T-cell (primary cell): ENCODE measurements at regions of chr3 and their contacts with region 1.

Region 1: DNA sequence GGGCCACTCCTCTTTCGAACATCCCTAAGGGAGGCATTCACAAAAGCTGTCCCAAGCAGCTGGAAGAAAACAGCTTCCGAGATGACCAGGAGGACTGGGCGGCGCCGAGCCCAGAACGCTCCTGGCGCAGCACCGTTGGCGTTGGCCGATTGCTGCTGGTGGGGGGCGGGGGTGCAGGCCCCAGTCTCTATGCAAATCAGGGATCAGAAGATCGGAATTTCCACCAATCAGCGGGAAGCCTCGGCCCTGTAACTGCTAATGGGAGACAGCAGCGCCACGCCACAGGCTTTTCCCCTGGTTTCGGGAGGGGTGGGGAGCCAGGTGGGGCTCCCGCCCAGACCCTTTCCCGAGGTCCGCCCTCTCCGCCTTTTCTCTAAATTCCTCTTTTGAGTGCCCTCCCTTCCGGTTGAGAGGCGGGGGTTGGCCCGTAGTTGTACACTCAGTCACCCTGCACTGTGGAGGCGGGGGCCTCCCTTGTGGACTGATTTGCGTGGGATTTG is 27.0 kb downstream of the HMCES start:
- DNase-seq: peak in 6 of 35 experiments; percentile 7 to 49 (median 24)
- ATAC-seq: peak in 3 of 4 experiments; percentile 22 to 45 (median 44)
- H3K4me3 ChIP-seq: no peak overlapping the region
- H3K4me3 Mint-ChIP-seq: peak overlapping the region in 1 of 3 donors; percentile 28
- H3K27ac ChIP-seq: no peak overlapping the region
- H3K27ac Mint-ChIP-seq: peak overlapping the region; percentile 55 to 87
- H3K4me1 ChIP-seq: peaks cover 0 to 9% of the 10 kb centered on the region in 2 experiments
- H3K4me1 Mint-ChIP-seq: peaks cover 13 to 28% (median 25%) of the 10 kb centered on the region in 3 donors
- H3K27me3 ChIP-seq: no peaks in the 10 kb centered on the region
- H3K27me3 Mint-ChIP-seq: no peaks in the 10 kb centered on the region

Region 2: GRCh38 chr3:128113817-128114794 is 1191.5 kb before region 1 on chr3:
- CTCF ChIA-PET with region 1: interaction called in 1 of 2 experiments, 11 read pairs
- POLR2A ChIA-PET with region 1: no interaction called
- DNase-seq: peak in 1 of 35 experiments; percentile 22
- ATAC-seq: peak in 2 of 4 experiments; percentile 17 to 38
- H3K4me3 ChIP-seq: peak overlapping the region in 1 of 2 donors; percentile 1
- H3K4me3 Mint-ChIP-seq: peak overlapping the region; percentile 37 to 67 (median 58)
- H3K27ac ChIP-seq: peak overlapping the region; percentile 76
- H3K27ac Mint-ChIP-seq: peak overlapping the region; percentile 73 to 86
- H3K4me1 ChIP-seq: peaks cover 3 to 33% of the 10 kb centered on the region in 2 experiments
- H3K4me1 Mint-ChIP-seq: peaks cover 56 to 57% (median 57%) of the 10 kb centered on the region in 3 donors
- H3K27me3 ChIP-seq: no peaks in the 10 kb centered on the region
- H3K27me3 Mint-ChIP-seq: no peaks in the 10 kb centered on the region

Region 3: DNA sequence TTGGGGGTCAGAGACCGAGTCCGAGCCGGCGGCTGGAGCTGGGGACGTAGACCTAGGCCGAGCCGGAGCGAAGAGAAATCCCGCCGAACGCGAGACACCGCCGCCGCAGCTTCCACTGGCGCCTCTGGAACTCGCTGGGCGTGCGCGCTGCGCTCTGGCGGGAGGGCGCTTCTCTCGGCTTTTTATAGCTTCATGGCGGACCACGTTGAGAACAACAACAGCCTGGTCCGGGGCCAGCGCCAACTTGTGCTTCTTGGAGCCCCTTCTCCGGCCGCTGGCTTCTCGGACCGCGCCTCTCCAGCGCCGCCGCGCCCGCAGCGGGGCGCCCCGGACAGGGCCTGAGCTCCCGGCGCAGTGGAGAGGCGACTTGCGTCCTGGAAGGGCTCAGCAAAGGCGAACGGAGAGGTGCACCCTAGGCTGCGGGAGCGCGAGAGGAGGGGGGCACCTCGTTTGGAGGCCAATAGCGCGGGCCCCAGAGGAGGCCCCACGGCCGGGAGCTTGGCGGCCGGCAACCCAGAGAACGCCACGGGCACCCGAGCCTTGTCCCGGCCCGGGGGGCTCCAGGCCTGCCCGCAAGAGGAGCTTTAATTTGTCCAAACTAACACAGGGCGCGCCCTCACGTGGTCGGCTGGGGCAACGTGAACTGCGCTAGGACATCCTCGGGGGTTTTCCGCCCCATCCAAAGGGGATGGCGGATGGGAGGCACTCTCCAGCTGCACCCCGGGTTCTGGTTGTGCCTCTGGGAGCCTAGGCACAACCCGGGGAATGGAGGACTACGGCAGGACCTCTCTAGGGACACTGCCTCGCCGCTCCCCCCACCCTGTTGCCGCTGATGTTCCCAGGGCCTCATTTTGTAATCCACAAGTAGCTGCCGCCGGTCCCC is 10.7 kb after region 1 on chr3:
- CTCF ChIA-PET with region 1: interaction called in 1 of 2 experiments, 4 read pairs
- POLR2A ChIA-PET with region 1: interaction called, 3 to 20 read pairs
- DNase-seq: peak; percentile 67 to 92 (median 84)
- ATAC-seq: peak; percentile 58 to 64 (median 62)
- H3K4me3 ChIP-seq: peak overlapping the region; percentile 71 to 96
- H3K4me3 Mint-ChIP-seq: peak overlapping the region; percentile 83 to 93 (median 89)
- H3K27ac ChIP-seq: no peak overlapping the region
- H3K27ac Mint-ChIP-seq: peak overlapping the region; percentile 79 to 84
- H3K4me1 ChIP-seq: peaks cover 10 to 36% of the 10 kb centered on the region in 2 experiments
- H3K4me1 Mint-ChIP-seq: peaks cover 22 to 28% (median 23%) of the 10 kb centered on the region in 3 donors
- H3K27me3 ChIP-seq: no peaks in the 10 kb centered on the region
- H3K27me3 Mint-ChIP-seq: no peaks in the 10 kb centered on the region

Region 4: GRCh38 chr3:130834476-130834875 is 1528.8 kb after region 1 on chr3:
- CTCF ChIA-PET with region 1: no interaction called
- POLR2A ChIA-PET with region 1: interaction called in 1 of 2 experiments, 12 read pairs
- DNase-seq: no peak
- ATAC-seq: no peak
- H3K4me3 ChIP-seq: no peak overlapping the region
- H3K4me3 Mint-ChIP-seq: no peak overlapping the region
- H3K27ac ChIP-seq: no peak overlapping the region
- H3K27ac Mint-ChIP-seq: no peak overlapping the region
- H3K4me1 ChIP-seq: no peaks in the 10 kb centered on the region
- H3K4me1 Mint-ChIP-seq: peaks cover 0 to 2% (median 0%) of the 10 kb centered on the region in 3 donors
- H3K27me3 ChIP-seq: no peaks in the 10 kb centered on the region
- H3K27me3 Mint-ChIP-seq: peaks cover 2 to 6% of the 10 kb centered on the region in 2 donors